CD4-positive, alpha-beta memory T cell (primary cell): ENCODE measurements at regions of chr7 and their contacts with region 1.

Region 1: GRCh38 chr7:14013898-14014297 is 24.4 kb upstream of the ETV1 start:
- DNase-seq: no peak
- H3K4me3 ChIP-seq: no peak overlapping the region
- H3K4me3 Mint-ChIP-seq: no peak overlapping the region
- H3K27ac ChIP-seq: no peak overlapping the region
- H3K27ac Mint-ChIP-seq: no peak overlapping the region
- H3K4me1 ChIP-seq: peaks cover 10% of the 10 kb centered on the region
- H3K4me1 Mint-ChIP-seq: no peaks in the 10 kb centered on the region
- H3K27me3 ChIP-seq: no peaks in the 10 kb centered on the region
- H3K27me3 Mint-ChIP-seq: peaks cover 2% of the 10 kb centered on the region in 2 donors

Region 2: DNA sequence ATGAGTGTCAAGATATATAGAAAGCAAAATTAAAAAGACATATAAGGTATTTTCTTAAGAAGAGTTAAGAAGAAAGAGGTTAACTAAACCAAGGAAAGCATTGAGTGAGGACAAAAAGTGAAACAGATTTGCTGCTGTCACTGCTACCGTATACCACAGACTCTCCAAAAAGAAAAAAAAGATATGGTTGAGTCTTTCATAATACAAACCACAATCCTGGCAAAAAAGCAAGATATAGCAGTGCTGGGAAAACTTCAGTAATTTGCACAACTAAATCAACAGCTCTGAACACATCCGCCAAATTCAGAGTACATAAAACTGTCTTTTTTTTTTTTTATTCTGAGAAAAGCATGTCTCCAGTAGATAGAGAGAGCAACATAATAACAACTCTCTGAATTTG is 139.1 kb before region 1 on chr7:
- CTCF ChIA-PET with region 1: no interaction called
- POLR2A ChIA-PET with region 1: no interaction called
- intact Hi-C with region 1: no loop called
- DNase-seq: peak in 4 of 5 donors; percentile 11 to 37 (median 16)
- H3K4me3 ChIP-seq: no peak overlapping the region
- H3K4me3 Mint-ChIP-seq: peak overlapping the region in 6 of 8 donors; percentile 3 to 61 (median 34)
- H3K27ac ChIP-seq: no peak overlapping the region
- H3K27ac Mint-ChIP-seq: peak overlapping the region in 2 of 7 donors; percentile 43 to 72
- H3K4me1 ChIP-seq: peaks cover 13% of the 10 kb centered on the region
- H3K4me1 Mint-ChIP-seq: peaks cover 9 to 17% (median 13%) of the 10 kb centered on the region in 4 donors
- H3K27me3 ChIP-seq: no peaks in the 10 kb centered on the region
- H3K27me3 Mint-ChIP-seq: peaks cover 0 to 2% of the 10 kb centered on the region in 2 donors

Region 3: DNA sequence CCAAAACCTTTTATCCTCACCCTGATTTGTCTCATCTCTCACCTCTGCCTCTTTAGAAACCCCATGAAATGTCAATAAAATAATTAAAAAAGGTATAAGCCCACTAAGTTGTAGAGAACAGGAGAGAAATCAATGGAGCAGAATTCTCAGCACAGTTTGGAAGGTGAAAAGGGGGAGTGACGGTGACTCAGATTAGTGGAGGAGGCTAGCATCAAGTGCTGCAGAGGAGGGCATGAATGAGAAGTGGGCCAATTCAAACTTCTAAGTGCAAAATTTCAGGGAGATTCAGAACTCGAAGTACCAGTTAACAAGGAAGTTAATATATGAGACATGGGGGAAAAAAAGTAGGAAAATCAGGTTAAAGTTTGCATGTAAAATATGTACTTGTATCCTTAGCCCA is 10.5 kb after region 1 on chr7:
- CTCF ChIA-PET with region 1: no interaction called
- POLR2A ChIA-PET with region 1: no interaction called
- intact Hi-C with region 1: no loop called
- DNase-seq: no peak
- H3K4me3 ChIP-seq: no peak overlapping the region
- H3K4me3 Mint-ChIP-seq: no peak overlapping the region
- H3K27ac ChIP-seq: no peak overlapping the region
- H3K27ac Mint-ChIP-seq: no peak overlapping the region
- H3K4me1 ChIP-seq: no peaks in the 10 kb centered on the region
- H3K4me1 Mint-ChIP-seq: no peaks in the 10 kb centered on the region
- H3K27me3 ChIP-seq: no peaks in the 10 kb centered on the region
- H3K27me3 Mint-ChIP-seq: no peaks in the 10 kb centered on the region

Region 4: GRCh38 chr7:14085901-14086300 is 72.0 kb after region 1 on chr7:
- CTCF ChIA-PET with region 1: no interaction called
- POLR2A ChIA-PET with region 1: no interaction called
- intact Hi-C with region 1: loop called (anchors 2 kb)
- DNase-seq: no peak
- H3K4me3 ChIP-seq: no peak overlapping the region
- H3K4me3 Mint-ChIP-seq: no peak overlapping the region
- H3K27ac ChIP-seq: no peak overlapping the region
- H3K27ac Mint-ChIP-seq: no peak overlapping the region
- H3K4me1 ChIP-seq: no peaks in the 10 kb centered on the region
- H3K4me1 Mint-ChIP-seq: no peaks in the 10 kb centered on the region
- H3K27me3 ChIP-seq: no peaks in the 10 kb centered on the region
- H3K27me3 Mint-ChIP-seq: no peaks in the 10 kb centered on the region

Region 5: DNA sequence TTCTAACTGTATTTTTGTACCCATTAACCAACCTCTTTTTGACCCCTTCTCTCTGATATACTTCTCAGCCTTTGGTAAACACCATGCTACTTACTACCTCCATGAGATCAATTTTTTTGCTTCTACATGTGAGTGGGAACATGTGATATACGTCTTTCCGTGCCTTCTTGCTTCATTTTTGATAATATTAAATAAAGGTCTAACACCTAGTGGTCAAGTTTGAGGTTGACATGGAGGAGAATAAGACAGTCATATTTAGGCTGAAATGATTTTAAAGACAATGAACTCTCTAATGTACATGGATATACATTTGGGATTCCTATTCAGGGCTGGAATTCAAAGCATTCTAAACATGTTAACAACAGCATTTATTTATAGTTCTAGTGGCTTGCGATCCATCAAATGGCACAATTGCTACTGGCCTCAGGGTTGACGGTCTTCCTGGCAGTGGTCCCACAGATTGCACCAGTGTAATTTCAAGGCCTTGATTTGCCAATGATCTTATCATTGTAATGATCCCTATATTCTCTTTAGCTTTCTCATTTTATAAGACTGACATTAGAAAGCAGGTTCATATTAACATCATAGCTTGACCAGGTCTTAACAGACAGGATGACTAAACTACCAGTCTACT is 291.5 kb after region 1 on chr7:
- CTCF ChIA-PET with region 1: no interaction called
- POLR2A ChIA-PET with region 1: no interaction called
- intact Hi-C with region 1: no loop called
- DNase-seq: no peak
- H3K4me3 ChIP-seq: no peak overlapping the region
- H3K4me3 Mint-ChIP-seq: no peak overlapping the region
- H3K27ac ChIP-seq: no peak overlapping the region
- H3K27ac Mint-ChIP-seq: no peak overlapping the region
- H3K4me1 ChIP-seq: no peaks in the 10 kb centered on the region
- H3K4me1 Mint-ChIP-seq: no peaks in the 10 kb centered on the region
- H3K27me3 ChIP-seq: no peaks in the 10 kb centered on the region
- H3K27me3 Mint-ChIP-seq: no peaks in the 10 kb centered on the region